ENCODE measurements at regions of chr1 and their contacts with region 1.

Region 1: DNA sequence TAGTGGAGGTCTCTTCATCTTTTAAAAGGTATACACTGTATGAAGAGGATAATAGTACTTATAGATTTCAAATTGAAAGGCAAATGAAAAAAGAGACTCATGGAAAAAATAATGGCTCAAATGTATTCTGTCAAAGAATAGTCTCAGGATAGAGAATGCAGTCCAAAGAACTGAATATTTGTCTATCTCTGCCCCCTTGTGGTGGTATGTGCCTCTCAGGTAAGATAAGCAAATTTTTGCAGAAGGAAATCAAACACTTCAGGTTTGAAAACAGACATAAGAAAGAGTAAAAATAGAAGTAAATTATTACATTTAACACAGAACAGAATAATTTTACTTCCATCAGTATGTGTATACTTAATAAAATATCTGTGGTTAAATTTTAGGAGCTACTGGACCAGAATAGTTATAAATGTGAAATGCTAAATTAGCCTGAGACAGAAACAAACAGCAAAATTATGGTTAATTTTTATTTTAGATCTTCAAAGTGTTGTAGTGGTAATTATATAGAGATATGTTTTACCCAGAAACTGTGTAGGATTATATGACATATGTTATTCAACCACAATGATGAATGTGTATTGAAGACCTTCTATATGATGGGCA is 164.4 kb upstream of the PALMD start:
- DNase-seq: peak; percentile 19 to 61
- H3K4me3 ChIP-seq: no peak overlapping the region
- H3K27ac ChIP-seq: no peak overlapping the region
- H3K4me1 ChIP-seq: no peaks in the 10 kb centered on the region
- H3K27me3 ChIP-seq: no peaks in the 10 kb centered on the region
- CTCF ChIP-seq: peak; percentile 97

Region 2: DNA sequence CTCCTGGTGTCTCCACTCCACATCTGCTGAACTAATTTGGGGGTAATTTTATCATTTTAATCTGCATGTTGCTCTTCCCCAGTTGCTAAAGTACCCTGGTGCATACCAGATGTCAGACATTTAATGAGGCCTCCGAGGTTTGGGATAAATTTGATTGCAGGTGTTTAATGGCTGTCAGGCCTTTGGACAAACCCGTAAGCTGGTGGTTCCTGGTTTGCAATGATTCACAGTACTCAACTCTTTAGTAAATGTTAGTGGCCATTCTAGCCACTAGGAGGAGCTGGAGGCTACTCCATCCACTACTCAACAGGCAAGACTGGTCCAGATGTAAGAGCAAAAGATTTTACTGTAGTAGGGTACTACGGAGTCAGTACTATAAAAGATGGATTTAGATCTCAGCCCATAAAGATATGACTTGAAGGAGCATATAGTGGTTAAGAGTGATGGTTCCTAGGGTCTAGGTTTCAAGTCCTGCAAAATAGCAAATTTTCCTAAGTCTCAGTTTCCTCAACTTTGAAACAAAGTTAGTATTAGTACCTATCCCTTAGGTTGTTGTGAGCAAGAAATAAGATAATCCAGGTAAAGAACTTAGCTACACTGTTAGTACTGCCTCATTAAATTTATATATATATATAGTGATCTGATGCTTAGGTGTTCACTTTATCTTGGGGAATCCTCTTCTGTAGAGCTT is 687.2 kb before region 1 on chr1:
- CTCF ChIA-PET with region 1: interaction called, 4 read pairs
- POLR2A ChIA-PET with region 1: no interaction called
- intact Hi-C with region 1: loop called (anchors 1 kb)
- DNase-seq: peak; percentile 22 to 52
- H3K4me3 ChIP-seq: no peak overlapping the region
- H3K27ac ChIP-seq: no peak overlapping the region
- H3K4me1 ChIP-seq: no peaks in the 10 kb centered on the region
- H3K27me3 ChIP-seq: no peaks in the 10 kb centered on the region
- CTCF ChIP-seq: peak; percentile 82

Region 3: DNA sequence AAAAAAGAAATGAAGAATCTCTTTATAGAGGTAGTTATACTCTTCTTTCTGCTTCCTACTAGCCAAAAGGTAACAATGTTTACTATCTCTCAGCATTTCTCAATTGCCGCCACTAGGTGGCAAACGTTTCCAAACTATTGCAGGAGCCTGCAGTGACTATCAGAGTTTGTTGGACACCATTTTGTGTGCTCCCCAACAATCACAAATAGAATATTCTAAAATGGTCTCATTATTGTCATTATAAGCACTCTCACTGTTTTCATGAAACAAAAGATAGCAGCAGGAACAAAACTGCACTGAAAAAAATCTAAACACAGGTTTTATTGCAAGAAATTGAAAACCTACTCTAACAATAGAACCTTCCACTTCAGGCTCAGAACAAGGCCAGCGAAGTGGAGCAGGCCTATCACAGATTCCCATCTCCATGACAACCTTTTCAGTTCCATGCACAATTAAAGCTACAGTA is 301.1 kb before region 1 on chr1:
- CTCF ChIA-PET with region 1: no interaction called
- POLR2A ChIA-PET with region 1: no interaction called
- intact Hi-C with region 1: loop called (anchors 1 kb)
- DNase-seq: peak; percentile 46 to 59
- H3K4me3 ChIP-seq: no peak overlapping the region
- H3K27ac ChIP-seq: no peak overlapping the region
- H3K4me1 ChIP-seq: no peaks in the 10 kb centered on the region
- H3K27me3 ChIP-seq: no peaks in the 10 kb centered on the region
- CTCF ChIP-seq: peak; percentile 99

Region 4: GRCh38 chr1:99424087-99424486 is 57.4 kb before region 1 on chr1:
- CTCF ChIA-PET with region 1: no interaction called
- POLR2A ChIA-PET with region 1: no interaction called
- intact Hi-C with region 1: no loop called
- DNase-seq: no peak
- H3K4me3 ChIP-seq: no peak overlapping the region
- H3K27ac ChIP-seq: no peak overlapping the region
- H3K4me1 ChIP-seq: no peaks in the 10 kb centered on the region
- H3K27me3 ChIP-seq: no peaks in the 10 kb centered on the region
- CTCF ChIP-seq: no peak

Measured in PC-9 (cell line).